ENCODE measurements at regions of chr2 and their contacts with region 1.

Region 1: GRCh38 chr2:68721482-68722101 is 13.0 kb upstream of the ARHGAP25 start:
- DNase-seq: peak; percentile 67
- H3K4me3 Mint-ChIP-seq: peak overlapping the region; percentile 58
- H3K27ac Mint-ChIP-seq: peak overlapping the region; percentile 95
- H3K4me1 Mint-ChIP-seq: peaks cover 99% of the 10 kb centered on the region
- H3K27me3 Mint-ChIP-seq: no peaks in the 10 kb centered on the region

Region 2: DNA sequence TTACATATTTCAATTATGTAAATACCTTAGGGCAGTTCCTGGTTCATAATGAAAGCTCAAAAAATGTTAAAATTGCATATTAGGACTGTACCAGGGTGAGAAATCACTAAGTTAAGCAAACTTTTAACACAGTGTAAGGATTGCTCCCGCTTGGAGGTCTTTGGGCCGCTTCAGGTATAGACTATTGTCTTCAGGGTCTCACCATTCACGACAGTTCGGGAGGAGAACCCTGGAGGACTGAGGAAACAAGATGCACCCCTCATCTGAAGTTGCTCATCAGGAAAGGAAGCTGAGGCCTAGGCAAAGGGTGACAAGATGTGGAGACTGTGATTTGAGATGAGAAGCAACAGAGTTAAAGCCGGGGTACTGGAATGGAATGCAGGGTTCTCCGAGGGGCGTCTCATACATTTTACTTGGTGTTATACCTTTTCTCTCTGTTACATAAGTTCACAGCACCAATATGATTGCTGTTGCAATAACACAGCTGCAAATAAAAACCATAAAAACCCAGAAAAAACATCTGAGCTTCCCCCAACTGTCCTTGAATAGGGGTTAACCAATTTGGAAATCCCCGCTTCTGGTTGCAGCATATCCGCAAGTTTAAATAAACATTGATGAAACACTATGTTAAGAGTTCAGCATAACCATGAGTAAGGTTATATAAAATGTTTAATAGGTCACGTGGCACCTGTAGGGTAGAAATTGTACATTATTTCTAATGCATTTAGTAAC is 294.6 kb before region 1 on chr2:
- CTCF ChIA-PET with region 1: no interaction called
- POLR2A ChIA-PET with region 1: no interaction called
- DNase-seq: no peak
- H3K4me3 Mint-ChIP-seq: no peak overlapping the region
- H3K27ac Mint-ChIP-seq: peak overlapping the region; percentile 70
- H3K4me1 Mint-ChIP-seq: peaks cover 16% of the 10 kb centered on the region
- H3K27me3 Mint-ChIP-seq: peaks cover under 1% of the 10 kb centered on the region

Region 3: GRCh38 chr2:68742626-68743415 is 21.2 kb after region 1 on chr2:
- CTCF ChIA-PET with region 1: interaction called, 40 read pairs
- POLR2A ChIA-PET with region 1: interaction called, 491 read pairs
- DNase-seq: peak; percentile 18
- H3K4me3 Mint-ChIP-seq: peak overlapping the region; percentile 52
- H3K27ac Mint-ChIP-seq: peak overlapping the region; percentile 68
- H3K4me1 Mint-ChIP-seq: peaks cover 92% of the 10 kb centered on the region
- H3K27me3 Mint-ChIP-seq: no peaks in the 10 kb centered on the region

Measured in activated CD4-positive, alpha-beta memory T cell treated with anti-CD3 and anti-CD28 coated beads, Interleukin-2, amount 10 ng/mL, durations not matched to agents 7 days and 5 days (primary cell).